ENCODE measurements at regions of chr2 and their contacts with region 1.

Region 1: GRCh38 chr2:71995067-71995665 is 152.5 kb downstream of the CYP26B1 start:
- DNase-seq: no peak
- H3K4me3 ChIP-seq: no peak overlapping the region
- H3K27ac ChIP-seq: no peak overlapping the region
- H3K4me1 ChIP-seq: peaks cover 0 to 2% (median 0%) of the 10 kb centered on the region in 4 experiments; a peak in 2 of 7 replicates
- H3K27me3 ChIP-seq: no peaks in the 10 kb centered on the region
- CTCF ChIP-seq: peak in 2 of 3 experiments; percentile 49 to 93; a peak in 3 of 4 replicates
- EP300 ChIP-seq: no peak
- POLR2A ChIP-seq: no peak
- RAD21 ChIP-seq: peak; percentile 67 to 68

Region 2: DNA sequence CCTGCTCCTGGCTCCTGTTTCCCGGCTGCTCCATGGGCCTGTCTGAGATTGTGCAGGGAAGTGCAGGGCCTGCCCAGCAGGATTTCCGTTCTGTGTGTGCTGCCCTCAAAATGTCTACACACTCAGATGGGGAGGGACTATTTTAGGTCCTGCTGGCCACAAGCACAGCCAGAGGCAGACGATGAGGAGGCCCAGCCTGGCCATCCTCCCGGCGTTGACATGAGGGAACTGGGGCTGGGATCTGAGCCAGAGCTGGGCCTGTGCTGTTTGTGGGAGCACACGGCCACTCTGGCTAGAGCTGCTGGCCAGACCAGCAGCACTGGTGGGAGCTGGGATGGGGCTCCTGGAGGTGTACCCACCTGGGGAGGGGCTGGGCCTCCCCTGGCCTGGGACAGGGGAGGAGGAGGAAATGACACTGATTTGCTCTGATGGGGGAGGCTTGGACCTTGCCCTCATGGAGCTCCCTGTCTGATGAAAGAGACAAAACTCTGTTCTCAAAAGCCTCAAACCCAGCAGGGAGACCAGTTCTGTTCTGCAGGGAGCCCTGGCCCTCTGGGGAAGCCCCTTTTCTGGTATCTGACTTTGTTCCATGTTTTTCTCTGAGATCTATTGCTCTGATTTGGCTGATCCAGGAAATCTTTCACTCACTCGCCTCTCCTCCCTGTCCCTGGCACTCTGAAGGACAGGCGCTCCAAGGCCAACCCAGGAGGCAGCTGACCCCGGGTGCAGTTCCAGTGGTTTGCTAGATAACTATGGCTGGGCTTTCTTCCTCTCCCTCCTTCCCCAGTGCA is 380.0 kb before region 1 on chr2:
- CTCF ChIA-PET with region 1: no interaction called
- POLR2A ChIA-PET with region 1: no interaction called
- DNase-seq: peak in 1 of 2 experiments; percentile 38
- H3K4me3 ChIP-seq: no peak overlapping the region
- H3K27ac ChIP-seq: no peak overlapping the region
- H3K4me1 ChIP-seq: no peaks in the 10 kb centered on the region
- H3K27me3 ChIP-seq: no peaks in the 10 kb centered on the region; a peak in 1 of 7 replicates
- CTCF ChIP-seq: no peak
- EP300 ChIP-seq: no peak
- POLR2A ChIP-seq: no peak
- RAD21 ChIP-seq: no peak

Region 3: DNA sequence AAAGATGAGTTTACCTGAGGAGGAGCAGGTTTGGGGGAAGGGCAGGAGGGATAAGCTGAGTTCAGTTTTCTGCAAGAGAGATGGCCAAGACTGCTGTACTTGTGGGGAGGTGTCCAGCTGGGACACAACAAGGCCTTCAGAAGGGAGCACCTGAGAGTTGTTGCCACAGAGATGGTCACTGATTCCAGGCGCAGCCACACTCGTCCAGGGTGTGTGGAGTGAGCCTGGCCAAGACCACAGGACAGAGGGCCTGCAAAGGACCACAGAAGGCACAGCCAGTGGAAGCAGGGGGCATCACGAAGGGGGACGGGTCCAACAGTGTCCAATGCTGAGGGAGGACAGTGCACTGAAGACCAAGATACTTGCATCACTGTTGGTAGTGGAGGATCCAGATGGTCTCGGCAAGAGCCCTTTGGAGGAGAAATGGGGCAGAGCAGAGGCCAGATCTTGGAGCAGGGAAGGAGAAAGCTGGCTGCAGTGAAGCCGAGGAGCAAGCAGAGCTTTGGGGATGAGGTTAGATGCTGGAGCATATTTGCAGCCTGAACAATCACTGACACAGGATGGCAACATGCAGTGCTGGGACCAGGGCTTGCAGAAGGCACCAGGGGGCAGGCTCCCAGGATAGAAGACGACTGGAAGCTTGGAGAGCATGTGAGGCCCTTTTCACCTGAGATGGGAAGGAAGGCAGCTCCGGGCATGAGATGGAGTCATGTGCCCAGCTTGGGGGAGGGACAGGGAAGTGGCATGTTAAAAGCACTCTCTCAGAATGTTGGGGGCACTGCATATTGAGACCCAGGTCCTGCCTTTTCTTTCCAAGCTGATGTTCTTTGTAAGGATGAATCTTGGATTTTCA is 61.5 kb before region 1 on chr2:
- CTCF ChIA-PET with region 1: interaction called, 12 read pairs
- POLR2A ChIA-PET with region 1: no interaction called
- DNase-seq: peak in 1 of 2 experiments; percentile 35
- H3K4me3 ChIP-seq: no peak overlapping the region
- H3K27ac ChIP-seq: no peak overlapping the region
- H3K4me1 ChIP-seq: no peaks in the 10 kb centered on the region; a peak in 1 of 7 replicates
- H3K27me3 ChIP-seq: no peaks in the 10 kb centered on the region
- CTCF ChIP-seq: peak in 2 of 3 experiments; percentile 9 to 24; a peak in 3 of 4 replicates
- EP300 ChIP-seq: no peak
- POLR2A ChIP-seq: no peak
- RAD21 ChIP-seq: peak; percentile 15 to 34; a peak in 2 of 4 replicates

Region 4: DNA sequence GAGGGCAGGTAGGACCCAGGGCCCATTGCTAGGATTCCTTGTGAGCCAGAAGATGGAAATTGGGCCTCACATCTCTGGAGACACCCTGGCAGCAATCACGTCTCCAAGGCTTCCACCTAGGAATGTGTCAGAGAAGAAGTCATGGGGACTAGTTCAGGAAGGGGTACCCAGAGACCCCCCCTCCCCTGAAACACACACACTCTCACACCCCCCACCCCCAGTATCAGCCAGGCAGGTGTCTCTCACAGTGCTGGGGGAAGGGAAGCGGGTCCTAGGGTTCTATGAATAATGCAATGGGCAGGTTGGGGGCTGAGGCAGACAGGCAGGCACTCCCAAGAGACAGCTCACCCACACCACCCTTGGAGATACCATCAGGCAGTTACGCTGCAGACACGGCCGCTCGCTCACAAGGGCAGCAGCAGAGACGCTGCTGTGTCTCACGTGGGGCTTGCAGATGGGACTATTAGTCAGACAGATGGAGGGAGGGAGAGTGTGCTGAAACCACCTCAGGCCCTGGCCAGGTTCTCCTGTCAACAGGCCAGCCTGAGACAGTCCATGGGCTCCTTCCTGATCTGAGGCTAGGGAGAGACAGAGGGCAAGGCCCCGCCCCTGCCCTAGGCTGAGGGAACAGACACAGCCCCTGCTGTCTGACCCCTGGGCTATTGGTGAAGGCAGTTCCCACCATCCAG is 17.9 kb after region 1 on chr2:
- CTCF ChIA-PET with region 1: interaction called, 16 read pairs
- POLR2A ChIA-PET with region 1: no interaction called
- DNase-seq: peak in 1 of 2 experiments; percentile 36
- H3K4me3 ChIP-seq: no peak overlapping the region
- H3K27ac ChIP-seq: no peak overlapping the region
- H3K4me1 ChIP-seq: peaks cover 0 to 3% (median 0%) of the 10 kb centered on the region in 4 experiments; a peak in 1 of 7 replicates
- H3K27me3 ChIP-seq: no peaks in the 10 kb centered on the region
- CTCF ChIP-seq: no peak
- EP300 ChIP-seq: no peak
- POLR2A ChIP-seq: no peak
- RAD21 ChIP-seq: no peak

Region 5: GRCh38 chr2:72129681-72130340 is 134.6 kb after region 1 on chr2:
- CTCF ChIA-PET with region 1: no interaction called
- POLR2A ChIA-PET with region 1: no interaction called
- DNase-seq: peak in 1 of 2 experiments; percentile 38
- H3K4me3 ChIP-seq: no peak overlapping the region
- H3K27ac ChIP-seq: no peak overlapping the region
- H3K4me1 ChIP-seq: peaks cover 0 to 9% (median 6%) of the 10 kb centered on the region in 4 experiments; a peak in 5 of 7 replicates
- H3K27me3 ChIP-seq: peaks cover 0 to 4% (median 0%) of the 10 kb centered on the region in 4 experiments; a peak in 1 of 7 replicates
- CTCF ChIP-seq: no peak
- EP300 ChIP-seq: no peak
- POLR2A ChIP-seq: no peak
- RAD21 ChIP-seq: no peak